B cell (primary cell): ENCODE measurements at regions of chr7 and their contacts with region 1.

Region 1: GRCh38 chr7:149028346-149029109 is at the start of gene PDIA4:
- DNase-seq: peak; percentile 99
- ATAC-seq: peak; percentile 86
- H3K4me3 ChIP-seq: peak within 1 kb of the TSS; percentile 51 to 77 (median 73)
- H3K4me3 Mint-ChIP-seq: peak within 1 kb of the TSS; percentile 93
- H3K27ac ChIP-seq: peak within 1 kb of the TSS; percentile 39 to 94
- H3K27ac Mint-ChIP-seq: peak within 1 kb of the TSS; percentile 91
- H3K4me1 ChIP-seq: peaks cover 19 to 21% of the 10 kb centered on the region in 2 donors
- H3K4me1 Mint-ChIP-seq: peaks cover 39% of the 10 kb centered on the region
- H3K27me3 ChIP-seq: no peaks in the 10 kb centered on the region
- H3K27me3 Mint-ChIP-seq: no peaks in the 10 kb centered on the region
- CTCF ChIP-seq: peak; percentile 47
- total RNA-seq, gene PDIA4: 34.7 and 36.5 TPM in 2 replicates

Region 2: DNA sequence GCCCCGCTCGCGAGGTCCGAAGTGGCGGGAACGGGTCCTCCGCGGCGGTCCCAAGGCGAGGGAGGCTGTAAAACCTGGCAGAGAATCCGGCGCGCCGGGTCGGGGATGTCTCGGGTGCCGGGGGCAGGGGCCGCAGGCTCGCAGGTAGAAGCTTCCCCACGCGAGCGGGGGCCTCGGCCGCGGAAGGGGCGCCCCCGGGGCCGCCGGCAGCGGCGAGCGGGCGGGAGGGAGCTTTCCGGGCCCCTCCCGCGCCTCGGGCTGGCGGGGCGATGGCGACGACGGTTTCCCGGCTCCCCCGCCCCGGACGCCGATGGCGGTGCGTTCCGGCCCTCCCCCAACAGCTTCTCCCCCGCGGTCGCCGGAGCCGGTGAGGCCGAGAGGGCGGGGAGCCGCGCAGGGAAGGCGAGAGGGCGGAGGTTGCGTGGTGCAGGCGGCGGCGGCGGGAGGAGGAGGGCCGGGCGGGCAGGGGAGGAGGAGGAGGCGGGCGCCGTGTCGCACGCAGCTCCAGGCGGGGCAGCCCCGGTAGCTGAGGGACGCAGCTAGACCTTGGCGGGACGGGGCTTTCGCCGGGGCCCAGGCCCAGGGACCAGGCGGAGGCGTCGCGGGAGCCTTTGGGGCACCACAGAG is 330.0 kb before region 1 on chr7 and contains the start of gene CUL1:
- CTCF ChIA-PET with region 1: no interaction called
- POLR2A ChIA-PET with region 1: no interaction called
- intact Hi-C with region 1: loop called (anchors 1 kb)
- DNase-seq: peak; percentile 90
- ATAC-seq: peak; percentile 81
- H3K4me3 ChIP-seq: peak within 1 kb of the TSS; percentile 76 to 93 (median 84)
- H3K4me3 Mint-ChIP-seq: peak within 1 kb of the TSS; percentile 91
- H3K27ac ChIP-seq: peak within 1 kb of the TSS; percentile 69 to 91
- H3K27ac Mint-ChIP-seq: peak within 1 kb of the TSS; percentile 92
- H3K4me1 ChIP-seq: peaks cover 30 to 31% of the 10 kb centered on the region in 2 donors
- H3K4me1 Mint-ChIP-seq: peaks cover 46% of the 10 kb centered on the region
- H3K27me3 ChIP-seq: no peaks in the 10 kb centered on the region
- H3K27me3 Mint-ChIP-seq: no peaks in the 10 kb centered on the region
- CTCF ChIP-seq: no peak
- total RNA-seq, gene CUL1: 51.1 and 53.5 TPM in 2 replicates

Region 3: GRCh38 chr7:148940702-148941597 is 87.6 kb before region 1 on chr7:
- CTCF ChIA-PET with region 1: interaction called, 4 read pairs
- POLR2A ChIA-PET with region 1: no interaction called
- intact Hi-C with region 1: loop called (anchors 1 kb)
- DNase-seq: peak; percentile 91
- ATAC-seq: peak; percentile 80
- H3K4me3 ChIP-seq: peak overlapping the region; percentile 85 to 98 (median 89)
- H3K4me3 Mint-ChIP-seq: peak overlapping the region; percentile 95
- H3K27ac ChIP-seq: peak overlapping the region; percentile 77 to 88
- H3K27ac Mint-ChIP-seq: peak overlapping the region; percentile 97
- H3K4me1 ChIP-seq: peaks cover 6 to 12% of the 10 kb centered on the region in 2 donors
- H3K4me1 Mint-ChIP-seq: peaks cover 13% of the 10 kb centered on the region
- H3K27me3 ChIP-seq: no peaks in the 10 kb centered on the region
- H3K27me3 Mint-ChIP-seq: no peaks in the 10 kb centered on the region
- CTCF ChIP-seq: no peak

Region 4: DNA sequence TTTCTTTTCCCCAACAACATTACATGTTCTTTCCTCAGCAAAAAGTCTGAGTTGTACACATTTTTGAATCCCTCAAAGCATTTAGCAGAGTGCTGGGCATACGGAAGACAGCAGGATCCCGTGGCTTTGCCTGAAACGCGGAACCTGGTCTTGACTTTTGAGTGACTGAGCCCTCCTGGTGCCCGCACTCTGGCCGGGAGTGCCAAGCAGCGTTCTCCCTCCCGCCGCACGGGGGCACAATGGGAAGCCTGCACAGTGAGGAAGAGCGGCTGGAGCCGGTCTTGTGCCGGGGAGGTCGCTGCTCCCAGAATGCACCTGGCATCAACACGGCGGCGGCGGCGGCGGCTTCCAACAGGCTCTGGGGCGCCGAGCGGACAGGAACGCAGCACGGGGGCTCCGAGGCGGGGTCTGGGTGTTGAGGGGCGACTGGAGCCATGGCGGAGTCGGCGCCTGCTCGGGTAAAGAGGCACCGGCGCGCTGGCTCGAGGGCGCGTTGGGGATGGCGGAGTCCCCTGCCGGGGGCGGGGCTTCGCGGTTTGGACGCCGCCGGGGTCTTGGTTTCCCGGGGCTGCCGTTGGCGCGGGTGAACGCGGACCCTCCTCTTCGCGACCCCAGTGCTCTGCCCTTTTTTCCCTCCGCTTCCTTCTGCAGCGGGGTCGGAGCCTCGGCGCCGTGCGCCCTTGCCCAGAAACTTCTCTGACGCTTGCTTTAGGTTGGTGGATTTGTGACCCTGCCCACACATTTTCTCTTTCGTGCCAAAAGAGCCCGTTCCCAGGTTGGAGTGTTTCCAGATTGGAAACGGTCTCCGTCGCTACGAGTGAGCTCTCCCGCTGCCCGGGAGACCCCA is 211.0 kb after region 1 on chr7 and contains the start of gene ZNF212:
- CTCF ChIA-PET with region 1: no interaction called
- POLR2A ChIA-PET with region 1: no interaction called
- intact Hi-C with region 1: loop called (anchors 5 kb)
- DNase-seq: peak; percentile 91
- ATAC-seq: peak; percentile 100
- H3K4me3 ChIP-seq: peak within 1 kb of the TSS; percentile 75 to 94 (median 84)
- H3K4me3 Mint-ChIP-seq: peak within 1 kb of the TSS; percentile 95
- H3K27ac ChIP-seq: peak within 1 kb of the TSS; percentile 33 to 73
- H3K27ac Mint-ChIP-seq: peak within 1 kb of the TSS; percentile 93
- H3K4me1 ChIP-seq: peaks cover 17 to 25% of the 10 kb centered on the region in 2 donors
- H3K4me1 Mint-ChIP-seq: peaks cover 28% of the 10 kb centered on the region
- H3K27me3 ChIP-seq: peaks cover 0 to 5% (median 0%) of the 10 kb centered on the region in 4 experiments
- H3K27me3 Mint-ChIP-seq: peaks cover 3% of the 10 kb centered on the region
- CTCF ChIP-seq: peak; percentile 84
- total RNA-seq, gene ZNF212: 22.5 and 25.7 TPM in 2 replicates

Region 5: DNA sequence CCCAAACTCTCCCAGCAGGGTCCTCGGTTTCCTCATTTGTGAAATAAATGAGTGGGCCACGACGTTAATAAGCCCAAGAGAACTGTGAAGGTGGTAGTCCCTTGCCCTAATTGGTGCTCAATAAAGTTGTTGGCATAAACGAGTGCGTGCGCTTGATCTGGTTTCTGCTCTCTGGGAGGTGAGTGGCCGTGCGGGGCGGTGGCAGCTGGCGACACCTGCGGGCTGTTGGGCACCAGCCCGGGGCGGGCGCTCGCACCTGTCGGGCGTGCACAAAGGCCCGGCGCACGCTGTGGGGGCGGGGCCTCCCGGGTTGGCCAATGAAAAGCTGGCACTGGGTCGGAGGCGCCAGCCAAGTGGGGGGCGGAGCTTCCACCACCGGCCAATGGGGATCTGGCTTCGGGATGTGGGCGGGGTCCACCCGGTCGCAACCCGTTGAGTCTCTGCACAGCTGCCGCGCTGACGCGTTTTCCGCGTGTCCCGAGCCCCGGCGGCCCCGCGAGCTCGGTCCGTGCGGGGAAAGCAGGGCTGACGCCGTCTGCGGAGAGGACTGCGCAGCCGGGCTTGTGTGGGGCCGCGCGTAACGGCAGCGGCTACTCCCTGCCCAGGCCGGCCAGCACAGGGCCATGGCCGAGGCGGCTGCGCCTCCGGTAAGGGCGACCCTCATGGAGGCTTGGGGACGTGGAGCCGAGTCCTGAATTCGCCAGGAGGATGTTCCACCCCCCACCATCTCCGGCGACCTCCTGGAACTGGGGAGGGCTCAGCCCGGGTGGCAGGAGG is 256.5 kb after region 1 on chr7:
- CTCF ChIA-PET with region 1: no interaction called
- POLR2A ChIA-PET with region 1: no interaction called
- intact Hi-C with region 1: loop called (anchors 1 kb)
- DNase-seq: peak; percentile 97
- ATAC-seq: peak; percentile 97
- H3K4me3 ChIP-seq: peak overlapping the region; percentile 31 to 69 (median 60)
- H3K4me3 Mint-ChIP-seq: peak overlapping the region; percentile 93
- H3K27ac ChIP-seq: peak overlapping the region in 1 of 2 donors; percentile 36
- H3K27ac Mint-ChIP-seq: peak overlapping the region; percentile 74
- H3K4me1 ChIP-seq: peaks cover 20 to 27% of the 10 kb centered on the region in 2 donors
- H3K4me1 Mint-ChIP-seq: peaks cover 32% of the 10 kb centered on the region
- H3K27me3 ChIP-seq: no peaks in the 10 kb centered on the region
- H3K27me3 Mint-ChIP-seq: no peaks in the 10 kb centered on the region
- CTCF ChIP-seq: no peak

Region 6: GRCh38 chr7:149771721-149772240 is 743.3 kb after region 1 on chr7:
- CTCF ChIA-PET with region 1: no interaction called
- POLR2A ChIA-PET with region 1: interaction called, 3 read pairs
- intact Hi-C with region 1: loop called (anchors 5 kb)
- DNase-seq: peak; percentile 89
- ATAC-seq: peak; percentile 97
- H3K4me3 ChIP-seq: peak overlapping the region in 4 of 5 experiments; percentile 53 to 74 (median 64)
- H3K4me3 Mint-ChIP-seq: peak overlapping the region; percentile 78
- H3K27ac ChIP-seq: no peak overlapping the region
- H3K27ac Mint-ChIP-seq: no peak overlapping the region
- H3K4me1 ChIP-seq: peaks cover 7 to 19% of the 10 kb centered on the region in 2 donors
- H3K4me1 Mint-ChIP-seq: peaks cover 9% of the 10 kb centered on the region
- H3K27me3 ChIP-seq: peaks cover 0 to 19% (median 1%) of the 10 kb centered on the region in 4 experiments
- H3K27me3 Mint-ChIP-seq: peaks cover 10% of the 10 kb centered on the region
- CTCF ChIP-seq: no peak